Panc1 (cell line): ENCODE measurements at regions of chr7 and their contacts with region 1.

Region 1: GRCh38 chr7:81186691-81187090 is 267.8 kb upstream of the SEMA3C start:
- DNase-seq: no peak
- ATAC-seq: no peak
- H3K4me3 ChIP-seq: no peak overlapping the region
- H3K27ac ChIP-seq: peak overlapping the region; percentile 29; the same call in 1 of the 2 replicates
- H3K4me1 ChIP-seq: no peaks in the 10 kb centered on the region
- H3K27me3 ChIP-seq: no peaks in the 10 kb centered on the region
- CTCF ChIP-seq: no peak

Region 2: GRCh38 chr7:81207801-81208200 is 21.1 kb after region 1 on chr7:
- CTCF ChIA-PET with region 1: no interaction called
- POLR2A ChIA-PET with region 1: no interaction called
- in situ Hi-C with region 1: no loop called
- intact Hi-C with region 1: no loop called
- DNase-seq: no peak
- ATAC-seq: no peak
- H3K4me3 ChIP-seq: no peak overlapping the region
- H3K27ac ChIP-seq: no peak overlapping the region
- H3K4me1 ChIP-seq: no peaks in the 10 kb centered on the region
- H3K27me3 ChIP-seq: no peaks in the 10 kb centered on the region
- CTCF ChIP-seq: no peak

Region 3: DNA sequence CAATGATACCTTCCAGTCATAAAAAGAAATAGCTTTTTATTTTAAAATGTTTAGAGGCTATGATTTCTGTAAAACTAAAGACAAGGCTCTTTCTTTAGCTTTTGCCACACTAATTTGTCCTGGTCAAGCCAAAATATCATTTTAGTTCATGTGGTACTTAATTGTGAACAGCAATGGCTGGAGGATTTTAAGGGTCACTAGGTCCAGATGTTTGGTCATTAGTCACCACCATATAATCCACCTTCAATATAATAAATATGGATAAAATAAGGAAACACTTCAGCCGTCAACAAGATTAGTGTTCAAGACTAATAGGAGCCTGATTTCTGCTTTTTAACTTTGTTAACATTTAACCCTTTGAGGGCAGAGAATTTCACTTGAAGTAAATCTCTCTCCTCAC is 633.2 kb after region 1 on chr7:
- CTCF ChIA-PET with region 1: no interaction called
- POLR2A ChIA-PET with region 1: no interaction called
- in situ Hi-C with region 1: no loop called
- intact Hi-C with region 1: loop called (anchors 5 kb)
- DNase-seq: no peak
- ATAC-seq: no peak
- H3K4me3 ChIP-seq: no peak overlapping the region
- H3K27ac ChIP-seq: no peak overlapping the region
- H3K4me1 ChIP-seq: no peaks in the 10 kb centered on the region
- H3K27me3 ChIP-seq: no peaks in the 10 kb centered on the region
- CTCF ChIP-seq: no peak